Breast epithelium (tissue), 4 donors: ENCODE measurements at regions of chr16 and their contacts with region 1.

Region 1: DNA sequence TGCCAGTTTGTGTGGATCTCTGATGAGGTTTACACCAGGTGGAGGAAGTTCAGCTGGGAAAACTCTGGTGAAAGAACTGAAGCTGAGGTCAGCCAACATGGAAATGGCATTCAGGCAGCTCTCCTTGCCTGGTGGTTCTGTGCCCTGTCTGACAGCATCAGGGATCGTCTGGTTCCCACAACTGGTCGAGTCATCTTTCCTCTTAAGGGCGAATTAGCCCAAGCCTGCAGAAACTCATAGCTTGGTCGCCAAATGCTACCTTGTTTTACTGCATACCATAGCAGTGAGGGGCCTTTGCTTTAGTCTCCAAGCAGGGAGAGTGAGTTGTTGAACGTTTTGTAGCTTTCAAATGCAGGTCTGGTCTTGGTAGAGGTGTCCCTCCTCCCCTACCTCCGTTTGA is 7.2 kb downstream of the PLCG2 start:
- DNase-seq: no peak
- H3K4me3 ChIP-seq: no peak overlapping the region
- H3K27ac ChIP-seq: peak overlapping the region; percentile 36 to 57
- H3K4me1 ChIP-seq: no peaks in the 10 kb centered on the region
- H3K27me3 ChIP-seq: no peaks in the 10 kb centered on the region
- CTCF ChIP-seq: no peak
- POLR2A ChIP-seq: no peak

Region 2: GRCh38 chr16:81767987-81768592 is 18.2 kb before region 1 on chr16:
- intact Hi-C with region 1: loop called (anchors 1 kb)
- DNase-seq: no peak
- H3K4me3 ChIP-seq: no peak overlapping the region
- H3K27ac ChIP-seq: no peak overlapping the region
- H3K4me1 ChIP-seq: no peaks in the 10 kb centered on the region
- H3K27me3 ChIP-seq: no peaks in the 10 kb centered on the region
- CTCF ChIP-seq: no peak
- POLR2A ChIP-seq: no peak

Region 3: DNA sequence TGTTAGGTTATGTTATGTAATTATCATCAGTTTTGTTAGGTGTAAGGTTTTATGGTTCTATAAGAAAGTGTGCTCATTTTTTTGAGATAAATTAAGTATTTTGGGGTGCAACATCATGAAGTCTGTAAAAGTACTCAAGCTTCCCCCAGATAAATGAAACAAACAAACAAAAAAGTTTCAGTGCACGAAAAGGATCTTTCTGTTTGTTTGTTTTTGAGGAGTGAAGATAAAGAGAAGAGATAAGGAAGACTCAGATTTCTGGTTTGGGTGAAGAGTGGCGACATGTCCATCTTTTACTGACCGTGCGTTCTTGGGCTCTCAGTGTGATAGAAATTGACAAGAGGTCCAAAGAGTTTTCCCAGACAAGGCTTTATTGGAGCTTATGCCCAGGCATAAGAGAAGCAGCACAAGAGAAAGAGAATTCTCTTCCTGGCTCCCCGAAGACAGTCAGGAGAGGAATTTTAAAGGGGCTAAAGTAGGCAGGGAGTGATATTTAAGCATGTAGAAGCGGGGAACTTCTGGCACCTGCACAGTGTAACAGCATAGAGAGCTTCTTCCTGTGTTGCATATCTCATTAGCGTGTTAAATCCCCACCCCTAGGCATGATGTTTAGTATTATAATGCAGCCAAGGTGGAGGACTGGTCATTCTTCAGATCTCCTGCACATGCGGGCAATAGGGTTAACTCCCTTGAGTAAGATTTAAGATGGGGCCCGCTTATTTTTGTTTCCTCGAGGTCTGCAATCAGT is 64.0 kb after region 1 on chr16:
- intact Hi-C with region 1: loop called (anchors 2 kb)
- DNase-seq: no peak
- H3K4me3 ChIP-seq: no peak overlapping the region
- H3K27ac ChIP-seq: no peak overlapping the region
- H3K4me1 ChIP-seq: no peaks in the 10 kb centered on the region
- H3K27me3 ChIP-seq: no peaks in the 10 kb centered on the region
- CTCF ChIP-seq: no peak
- POLR2A ChIP-seq: no peak